Lower leg skin (tissue), 4 donors: ENCODE measurements at regions of chrX and their contacts with region 1.

Region 1: DNA sequence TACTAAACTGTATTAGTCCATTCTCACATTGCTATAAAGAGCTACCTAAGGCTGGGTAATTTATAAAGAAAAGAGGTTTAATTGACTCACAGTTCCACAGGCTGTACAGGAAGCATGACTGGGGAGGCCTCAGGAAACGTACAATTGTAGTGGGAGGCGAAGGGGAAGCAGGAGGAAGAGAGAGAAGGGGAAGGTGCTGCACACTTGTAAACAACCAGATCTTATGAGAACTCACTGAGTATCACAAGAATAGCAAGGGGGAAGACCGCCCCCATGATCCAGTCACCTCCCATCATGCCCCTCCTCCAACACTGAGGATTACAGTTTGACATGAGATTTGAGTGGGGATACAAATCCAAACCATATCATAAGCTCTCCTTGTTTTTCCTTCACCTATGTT is 40.9 kb downstream of the RPA4 start:
- DNase-seq: no peak
- H3K4me3 ChIP-seq: no peak overlapping the region
- CTCF ChIP-seq: no peak
- POLR2A ChIP-seq: no peak

Region 2: DNA sequence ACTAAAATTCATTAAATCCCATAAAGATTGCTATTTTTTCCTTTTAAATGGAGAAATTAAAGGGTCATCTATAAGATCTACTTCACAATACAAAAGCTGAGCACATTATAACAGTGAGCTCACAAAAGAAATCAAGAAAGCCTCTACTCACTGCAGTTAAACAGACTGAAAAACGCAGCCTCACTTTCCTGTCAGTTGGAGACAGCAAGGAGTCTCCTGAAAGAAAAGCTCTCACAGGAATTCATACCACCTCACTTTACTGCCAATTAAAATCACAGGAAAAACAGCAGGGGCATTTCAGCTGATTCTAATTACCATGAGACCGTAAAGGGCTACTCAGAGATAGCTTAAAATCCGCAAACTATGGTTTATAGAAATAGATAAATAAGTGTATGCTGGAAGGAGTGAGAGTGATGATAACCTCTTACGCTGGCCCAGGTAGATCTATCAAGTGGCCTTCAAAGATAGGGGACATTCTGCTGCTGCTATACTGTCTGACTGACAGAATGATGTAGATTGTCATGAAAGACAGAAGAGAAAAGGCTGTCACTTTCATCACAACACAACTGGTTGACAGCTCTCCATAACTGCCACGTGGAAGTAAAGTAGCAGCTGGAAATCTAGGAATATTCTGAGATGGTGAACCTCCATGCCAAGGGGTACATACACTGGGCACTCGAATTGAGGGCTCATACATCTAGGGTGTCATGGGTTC is 1573.7 kb before region 1 on chrX:
- intact Hi-C with region 1: loop called (anchors 10 kb)
- DNase-seq: no peak
- H3K4me3 ChIP-seq: no peak overlapping the region
- CTCF ChIP-seq: no peak
- POLR2A ChIP-seq: no peak

Region 3: GRCh38 chrX:97380200-97380599 is 455.6 kb after region 1 on chrX:
- intact Hi-C with region 1: no loop called
- DNase-seq: no peak
- H3K4me3 ChIP-seq: no peak overlapping the region
- CTCF ChIP-seq: no peak
- POLR2A ChIP-seq: no peak